Breast epithelium (tissue), 4 donors: ENCODE measurements at regions of chr5 and their contacts with region 1.

Region 1: GRCh38 chr5:174151599-174152181 is 106.2 kb downstream of the NSG2 start:
- DNase-seq: no peak
- H3K4me3 ChIP-seq: no peak overlapping the region
- H3K27ac ChIP-seq: no peak overlapping the region
- H3K4me1 ChIP-seq: no peaks in the 10 kb centered on the region
- H3K27me3 ChIP-seq: no peaks in the 10 kb centered on the region
- CTCF ChIP-seq: no peak
- POLR2A ChIP-seq: no peak

Region 2: GRCh38 chr5:174030289-174030688 is 121.4 kb before region 1 on chr5:
- intact Hi-C with region 1: no loop called
- DNase-seq: no peak
- H3K4me3 ChIP-seq: no peak overlapping the region
- H3K27ac ChIP-seq: no peak overlapping the region
- H3K4me1 ChIP-seq: no peaks in the 10 kb centered on the region
- H3K27me3 ChIP-seq: peaks cover 0 to 2% of the 10 kb centered on the region in 2 donors
- CTCF ChIP-seq: no peak
- POLR2A ChIP-seq: no peak

Region 3: DNA sequence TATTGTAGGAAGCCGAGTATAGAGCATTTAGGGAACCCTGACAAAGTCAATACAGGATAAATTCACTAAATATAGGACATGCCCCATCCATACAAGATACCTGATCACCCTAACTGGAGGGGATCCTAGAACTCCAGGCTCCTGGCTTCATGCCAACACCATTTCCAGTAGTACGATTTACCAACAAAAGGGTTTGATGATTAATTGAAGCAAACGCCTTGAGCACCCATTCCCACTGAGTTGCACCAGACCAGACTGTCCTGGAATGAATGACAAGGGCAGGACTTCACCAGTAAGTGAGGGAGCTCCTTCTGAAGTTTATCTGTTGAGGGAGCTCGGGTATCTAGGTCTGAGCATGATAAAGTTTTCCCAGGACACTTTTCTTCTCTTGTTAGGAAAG is 245.5 kb after region 1 on chr5:
- intact Hi-C with region 1: loop called (anchors 5 kb)
- DNase-seq: no peak
- H3K4me3 ChIP-seq: no peak overlapping the region
- H3K27ac ChIP-seq: no peak overlapping the region
- H3K4me1 ChIP-seq: no peaks in the 10 kb centered on the region
- H3K27me3 ChIP-seq: peaks cover 0 to 16% of the 10 kb centered on the region in 2 donors
- CTCF ChIP-seq: no peak
- POLR2A ChIP-seq: no peak

Region 4: GRCh38 chr5:174655351-174655750 is 503.7 kb after region 1 on chr5:
- intact Hi-C with region 1: no loop called
- DNase-seq: no peak
- H3K4me3 ChIP-seq: no peak overlapping the region
- H3K27ac ChIP-seq: no peak overlapping the region
- H3K4me1 ChIP-seq: no peaks in the 10 kb centered on the region
- H3K27me3 ChIP-seq: peaks cover 0 to 7% of the 10 kb centered on the region in 2 donors
- CTCF ChIP-seq: no peak
- POLR2A ChIP-seq: no peak